K562 (cell line): ENCODE measurements at regions of chr6 and their contacts with region 1.

Region 1: GRCh38 chr6:125923987-125924568 is 32.5 kb upstream of the HINT3 start:
- DNase-seq: peak; percentile 22 to 76 (median 48)
- ATAC-seq: peak; percentile 87
- H3K4me3 ChIP-seq: no peak overlapping the region
- H3K27ac ChIP-seq: peak overlapping the region; percentile 70
- H3K4me1 ChIP-seq: peaks cover 11 to 23% of the 10 kb centered on the region in 2 experiments
- H3K27me3 ChIP-seq: no peaks in the 10 kb centered on the region
- CTCF ChIP-seq: peak in 1 of 3 experiments; percentile 10; a peak in 1 of 6 replicates
- EP300 ChIP-seq: peak; percentile 68; the same call in 1 of the 2 replicates
- POLR2A ChIP-seq: no peak
- RAD21 ChIP-seq: 0 out of 4 replicates have a peak, but pooled peaks of 1 of the 2 experiments have one; percentile 20

Region 2: DNA sequence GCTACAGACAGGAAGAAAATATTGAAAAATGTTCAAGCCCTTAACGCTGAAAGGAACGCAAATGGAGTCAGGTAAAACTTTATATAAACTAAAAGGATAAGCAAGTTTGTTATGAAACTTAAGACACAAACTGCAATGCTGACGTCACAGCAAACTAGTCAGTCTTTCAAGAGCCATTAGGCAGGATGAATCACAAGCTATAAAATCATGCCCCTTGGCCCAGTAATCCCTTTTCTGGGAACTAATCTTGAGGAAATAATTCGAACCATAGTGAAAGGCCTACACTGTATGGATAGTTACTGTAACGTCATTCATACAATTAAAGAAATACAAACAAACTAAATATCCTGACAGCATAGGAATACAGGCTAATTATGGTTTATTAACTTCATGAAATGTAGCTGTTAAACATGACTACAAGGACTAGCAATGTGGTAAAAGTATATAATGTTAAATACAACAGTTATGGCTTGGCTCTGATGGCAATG is 10.2 kb before region 1 on chr6:
- CTCF ChIA-PET with region 1: no interaction called
- POLR2A ChIA-PET with region 1: interaction called, 14 read pairs
- in situ Hi-C with region 1: no loop called
- intact Hi-C with region 1: no loop called
- DNase-seq: peak in 1 of 4 experiments; percentile 20
- ATAC-seq: no peak
- H3K4me3 ChIP-seq: no peak overlapping the region
- H3K27ac ChIP-seq: no peak overlapping the region
- H3K4me1 ChIP-seq: peaks cover 3 to 8% of the 10 kb centered on the region in 2 experiments; a peak in 2 of 5 replicates
- H3K27me3 ChIP-seq: no peaks in the 10 kb centered on the region
- CTCF ChIP-seq: no peak
- EP300 ChIP-seq: no peak
- POLR2A ChIP-seq: no peak
- RAD21 ChIP-seq: no peak

Region 3: DNA sequence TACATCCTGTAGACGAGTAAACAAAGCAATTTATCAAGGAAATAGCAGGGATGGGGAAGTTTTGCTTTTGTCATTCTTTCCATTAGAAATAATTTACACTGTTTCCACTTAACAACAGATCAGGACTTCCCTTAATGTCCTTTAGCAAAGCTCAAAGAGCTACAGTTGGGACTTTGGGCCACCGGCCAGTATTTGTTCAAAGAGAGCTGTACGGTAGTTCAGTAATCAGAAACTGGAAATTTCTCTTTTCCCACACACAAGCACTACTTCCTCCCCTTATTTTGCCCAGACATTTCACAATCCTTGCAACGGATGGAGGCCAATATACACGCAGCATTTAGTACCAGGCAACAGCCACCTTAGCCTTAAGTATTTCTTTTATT is 20.3 kb after region 1 on chr6:
- CTCF ChIA-PET with region 1: no interaction called
- POLR2A ChIA-PET with region 1: interaction called, 5 read pairs
- in situ Hi-C with region 1: no loop called
- intact Hi-C with region 1: loop called (anchors 2 kb)
- DNase-seq: peak in 1 of 4 experiments; percentile 30
- ATAC-seq: peak; percentile 4; the same call in 1 of the 3 replicates
- H3K4me3 ChIP-seq: no peak overlapping the region
- H3K27ac ChIP-seq: peak overlapping the region; percentile 70
- H3K4me1 ChIP-seq: peaks cover 18 to 82% of the 10 kb centered on the region in 2 experiments
- H3K27me3 ChIP-seq: no peaks in the 10 kb centered on the region
- CTCF ChIP-seq: no peak
- EP300 ChIP-seq: 0 out of 2 replicates have a peak, but pooled peaks have one; percentile 21
- POLR2A ChIP-seq: no peak
- RAD21 ChIP-seq: no peak

Region 4: DNA sequence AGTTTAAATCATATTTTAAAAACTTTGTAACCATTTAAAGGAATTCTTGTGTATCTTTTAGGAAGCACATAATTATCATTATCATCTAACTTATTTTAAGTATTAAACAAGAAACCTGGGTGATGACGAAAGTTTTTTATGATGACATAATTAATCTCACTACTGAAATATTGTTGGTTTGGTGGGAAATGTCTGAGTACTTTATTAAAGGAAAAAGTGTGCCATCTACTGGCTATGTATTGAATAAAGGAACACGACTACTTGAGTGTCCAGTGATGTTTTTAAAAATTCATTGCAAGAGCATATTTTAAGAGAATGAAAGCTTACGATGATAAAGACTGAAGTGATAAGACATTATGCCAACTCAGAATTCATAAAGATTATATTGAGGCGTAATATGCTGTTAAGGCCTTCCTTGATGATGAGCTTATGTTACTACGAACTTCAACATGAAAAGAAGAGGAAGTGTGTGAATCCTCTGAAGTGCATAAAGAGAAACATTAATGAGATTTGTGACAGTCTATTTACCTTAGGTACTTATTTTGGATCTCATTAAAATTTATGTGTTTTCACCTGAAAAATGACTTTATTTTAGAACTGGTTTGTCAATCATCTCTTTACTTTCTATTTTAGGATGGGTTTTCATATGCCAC is 50.3 kb after region 1 on chr6:
- CTCF ChIA-PET with region 1: no interaction called
- POLR2A ChIA-PET with region 1: no interaction called
- in situ Hi-C with region 1: no loop called
- intact Hi-C with region 1: no loop called
- DNase-seq: peak in 3 of 4 experiments; percentile 39 to 64 (median 41)
- ATAC-seq: peak; percentile 90
- H3K4me3 ChIP-seq: no peak overlapping the region
- H3K27ac ChIP-seq: no peak overlapping the region
- H3K4me1 ChIP-seq: no peaks in the 10 kb centered on the region
- H3K27me3 ChIP-seq: no peaks in the 10 kb centered on the region
- CTCF ChIP-seq: peak; percentile 45 to 80 (median 50); a peak in 5 of 6 replicates
- EP300 ChIP-seq: peak; percentile 23; the same call in 1 of the 2 replicates
- POLR2A ChIP-seq: no peak
- RAD21 ChIP-seq: peak; percentile 81 to 84